Colonic mucosa (tissue), 4 donors: ENCODE measurements at regions of chr16 and their contacts with region 1.

Region 1: DNA sequence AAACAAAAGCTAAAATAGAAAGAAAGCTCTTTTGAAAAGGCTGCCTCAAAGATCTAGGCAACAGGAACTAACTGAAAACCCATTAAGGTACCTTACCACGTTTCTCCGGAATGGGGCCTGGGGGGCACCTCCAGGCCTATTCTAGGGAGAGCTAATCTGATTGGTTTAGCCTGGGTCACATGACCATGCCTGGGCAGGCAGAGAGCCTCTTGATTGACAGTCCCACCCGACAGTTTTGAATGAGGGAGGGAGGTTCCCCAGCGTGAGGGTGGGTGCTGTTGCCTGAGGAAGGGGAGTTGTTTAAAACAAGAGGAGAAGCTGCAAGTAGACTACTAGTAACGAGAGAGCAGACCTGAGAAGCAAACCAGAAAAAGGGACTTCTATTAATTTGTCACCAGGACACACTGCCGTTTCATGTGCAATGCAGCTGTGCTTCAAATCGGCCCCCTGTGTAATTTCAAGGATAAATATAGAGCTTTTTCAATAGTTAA is 143.4 kb upstream of the HS3ST2 start:
- DNase-seq: no peak
- H3K4me3 ChIP-seq: no peak overlapping the region
- H3K27ac ChIP-seq: no peak overlapping the region
- H3K4me1 ChIP-seq: no peaks in the 10 kb centered on the region
- H3K27me3 ChIP-seq: no peaks in the 10 kb centered on the region
- CTCF ChIP-seq: no peak

Region 2: GRCh38 chr16:22374311-22375116 is 296.1 kb before region 1 on chr16 and contains the start of gene CDR2:
- intact Hi-C with region 1: no loop called
- DNase-seq: peak; percentile 99
- H3K4me3 ChIP-seq: peak within 1 kb of the TSS; percentile 92
- H3K27ac ChIP-seq: peak within 1 kb of the TSS; percentile 85
- H3K4me1 ChIP-seq: peaks cover 9% of the 10 kb centered on the region
- H3K27me3 ChIP-seq: no peaks in the 10 kb centered on the region
- CTCF ChIP-seq: no peak
- total RNA-seq, gene CDR2: 24.0 to 31.5 TPM

Region 3: GRCh38 chr16:22763437-22764080 is 93.0 kb after region 1 on chr16:
- intact Hi-C with region 1: loop called (anchors 10 kb)
- DNase-seq: no peak
- H3K4me3 ChIP-seq: no peak overlapping the region
- H3K27ac ChIP-seq: no peak overlapping the region
- H3K4me1 ChIP-seq: no peaks in the 10 kb centered on the region
- H3K27me3 ChIP-seq: no peaks in the 10 kb centered on the region
- CTCF ChIP-seq: no peak